H1 (cell line): ENCODE measurements at regions of chr21 and their contacts with region 1.

Region 1: GRCh38 chr21:46323227-46324128 is at the start of gene C21orf58:
- DNase-seq: peak; percentile 88 to 96
- H3K4me3 ChIP-seq: peak within 1 kb of the TSS; percentile 92 to 96 (median 94)
- H3K27ac ChIP-seq: peak within 1 kb of the TSS; percentile 86
- H3K4me1 ChIP-seq: peaks cover 0 to 9% (median 8%) of the 10 kb centered on the region in 4 experiments; a peak in 6 of 7 replicates
- H3K27me3 ChIP-seq: no peaks in the 10 kb centered on the region
- CTCF ChIP-seq: no peak
- EP300 ChIP-seq: no peak; a peak in 1 of 3 replicates
- POLR2A ChIP-seq: peak in 1 of 2 experiments; percentile 69; a peak in 2 of 3 replicates
- RAD21 ChIP-seq: no peak
- total RNA-seq, gene C21orf58: 22.4 and 26.1 TPM in 2 replicates

Region 2: DNA sequence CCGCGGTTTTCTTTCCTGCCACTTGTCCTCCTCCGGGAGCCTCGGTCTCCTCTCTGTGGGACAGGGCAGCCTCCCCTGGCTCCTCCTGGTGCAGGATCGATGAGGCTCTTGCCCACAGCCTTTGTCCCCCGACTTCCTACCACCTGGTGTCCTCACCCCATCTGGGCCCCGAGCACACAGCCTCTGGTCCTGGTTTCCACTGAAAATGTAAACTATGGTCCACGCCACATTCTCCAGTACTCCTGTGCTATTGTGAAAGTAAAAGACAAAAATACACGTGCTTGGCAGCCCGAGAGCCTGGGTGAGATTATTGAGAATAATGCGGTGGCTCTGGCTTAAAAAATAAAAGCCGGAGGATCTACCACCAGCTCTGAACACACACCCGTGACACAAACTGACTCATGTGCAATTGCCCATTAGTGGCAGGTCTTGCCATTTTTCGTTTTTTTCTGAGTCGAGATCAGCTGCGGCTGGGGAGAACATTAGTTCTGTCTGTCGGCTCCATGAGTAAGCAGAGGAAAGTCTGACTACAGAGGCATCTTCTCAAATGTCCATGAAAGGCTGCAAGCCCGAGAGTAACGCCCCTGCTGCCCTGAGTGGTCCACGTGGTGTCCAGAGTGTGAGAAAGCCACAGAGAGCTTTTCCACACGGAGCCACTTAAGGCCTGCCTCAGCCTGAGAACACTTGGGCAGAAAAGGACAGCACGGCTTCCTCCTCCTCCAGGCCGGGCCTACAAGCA is 231.3 kb before region 1 on chr21:
- CTCF ChIA-PET with region 1: no interaction called
- POLR2A ChIA-PET with region 1: no interaction called
- DNase-seq: no peak
- H3K4me3 ChIP-seq: no peak overlapping the region
- H3K27ac ChIP-seq: no peak overlapping the region
- H3K4me1 ChIP-seq: peaks cover 0 to 2% (median 0%) of the 10 kb centered on the region in 4 experiments; a peak in 1 of 7 replicates
- H3K27me3 ChIP-seq: peaks cover 0 to 9% (median 4%) of the 10 kb centered on the region in 4 experiments; a peak in 4 of 7 replicates
- CTCF ChIP-seq: no peak
- EP300 ChIP-seq: no peak
- POLR2A ChIP-seq: no peak
- RAD21 ChIP-seq: no peak

Region 3: DNA sequence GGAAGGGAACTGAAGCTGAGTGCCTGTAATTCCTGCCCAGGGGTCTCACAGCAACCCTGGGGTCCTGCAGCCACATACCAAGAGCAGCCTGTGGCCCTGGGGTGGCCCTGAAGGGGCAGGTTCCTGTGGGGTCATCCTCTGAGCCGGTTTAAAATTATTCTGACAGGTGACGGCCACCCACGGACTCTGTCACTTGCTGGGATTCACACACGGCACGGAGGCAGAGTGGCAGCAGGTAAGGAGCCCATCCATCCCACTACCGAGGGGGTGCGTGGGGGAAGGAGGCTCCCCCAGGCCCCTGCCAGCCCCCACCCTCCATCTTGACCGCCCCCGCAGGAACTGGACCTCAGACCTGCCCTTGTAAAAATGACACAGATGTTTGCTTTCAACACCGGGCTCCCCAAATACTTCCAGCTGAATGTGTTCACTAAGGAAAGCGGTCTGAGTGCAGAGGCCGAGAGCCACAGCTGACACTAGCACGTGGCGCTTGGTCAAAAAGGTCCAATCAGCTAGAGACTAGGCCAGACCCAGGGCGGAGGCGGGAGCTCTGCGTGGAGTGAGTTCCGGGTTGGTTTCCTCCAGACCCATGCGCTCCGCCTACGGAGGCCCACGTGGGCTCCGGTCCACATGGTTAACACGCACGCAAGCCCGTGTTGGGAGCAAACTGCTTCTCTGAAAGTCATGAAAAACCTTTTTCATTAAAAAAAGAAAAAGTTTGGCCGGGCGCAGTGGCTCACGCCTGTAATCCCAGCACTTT is 27.3 kb before region 1 on chr21:
- CTCF ChIA-PET with region 1: interaction called, 3 read pairs
- POLR2A ChIA-PET with region 1: interaction called, 22 read pairs
- DNase-seq: peak in 1 of 2 experiments; percentile 51
- H3K4me3 ChIP-seq: no peak overlapping the region
- H3K27ac ChIP-seq: no peak overlapping the region
- H3K4me1 ChIP-seq: peaks cover 2 to 12% (median 8%) of the 10 kb centered on the region in 4 experiments; a peak in 6 of 7 replicates
- H3K27me3 ChIP-seq: peaks cover 0 to 3% (median 0%) of the 10 kb centered on the region in 4 experiments; a peak in 1 of 7 replicates
- CTCF ChIP-seq: no peak
- EP300 ChIP-seq: no peak
- POLR2A ChIP-seq: no peak
- RAD21 ChIP-seq: no peak

Region 4: DNA sequence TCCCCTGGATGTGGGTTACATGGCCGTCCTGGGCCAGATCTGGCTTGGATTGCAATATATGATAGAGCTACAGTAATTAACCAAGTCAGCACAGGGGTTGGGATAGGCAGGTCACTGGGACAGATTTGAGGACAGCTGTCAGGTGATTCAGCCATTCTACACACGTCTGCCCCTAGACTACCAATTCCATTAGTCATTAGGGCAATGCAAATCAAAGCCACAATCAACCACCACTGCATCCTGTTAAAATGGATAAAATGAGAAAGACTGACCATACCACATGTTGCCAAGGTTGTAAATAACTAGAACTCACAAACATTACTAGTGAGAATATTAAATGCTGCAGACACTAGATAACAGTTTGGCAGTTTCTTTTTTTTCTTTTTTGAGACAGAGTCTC is 15.9 kb before region 1 on chr21:
- CTCF ChIA-PET with region 1: interaction called, 3 read pairs
- POLR2A ChIA-PET with region 1: interaction called, 15 read pairs
- DNase-seq: no peak
- H3K4me3 ChIP-seq: no peak overlapping the region
- H3K27ac ChIP-seq: no peak overlapping the region
- H3K4me1 ChIP-seq: no peaks in the 10 kb centered on the region
- H3K27me3 ChIP-seq: no peaks in the 10 kb centered on the region
- CTCF ChIP-seq: no peak
- EP300 ChIP-seq: no peak
- POLR2A ChIP-seq: no peak
- RAD21 ChIP-seq: no peak